ENCODE measurements at regions of chr4 and their contacts with region 1.

Region 1: GRCh38 chr4:176340871-176341685 is 21.3 kb downstream of the SPCS3 start:
- DNase-seq: no peak
- ATAC-seq: peak; percentile 76
- H3K4me3 ChIP-seq: no peak overlapping the region
- H3K27ac ChIP-seq: no peak overlapping the region
- H3K4me1 ChIP-seq: no peaks in the 10 kb centered on the region
- H3K27me3 ChIP-seq: no peaks in the 10 kb centered on the region
- CTCF ChIP-seq: peak; percentile 50 to 74 (median 55); a peak in 5 of 6 replicates
- EP300 ChIP-seq: no peak
- POLR2A ChIP-seq: no peak
- RAD21 ChIP-seq: peak; percentile 86

Region 2: DNA sequence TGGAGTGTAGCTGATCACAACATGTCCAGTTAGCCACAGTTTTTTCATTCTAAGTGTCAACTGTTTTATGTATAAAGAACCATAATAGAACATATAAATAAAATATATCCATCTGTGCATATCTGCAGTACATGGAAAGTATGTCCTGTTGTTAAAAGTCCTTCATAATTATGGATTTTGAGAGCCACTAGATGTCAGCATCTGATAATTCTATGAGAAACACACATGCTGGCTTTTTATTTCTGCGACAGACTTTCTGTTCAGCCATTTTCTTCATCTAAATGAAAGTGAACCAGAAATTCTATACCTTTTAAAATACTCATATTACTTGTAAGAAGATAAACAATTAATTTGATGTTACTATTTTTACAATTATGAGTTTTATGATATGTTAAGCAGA is 780.5 kb before region 1 on chr4:
- CTCF ChIA-PET with region 1: interaction called, 7 read pairs
- POLR2A ChIA-PET with region 1: no interaction called
- RAD21 ChIA-PET with region 1: no interaction called
- SMC1A ChIA-PET with region 1: no interaction called
- in situ Hi-C with region 1: loop called (anchors 25 kb)
- intact Hi-C with region 1: loop called (anchors 5 kb)
- DNase-seq: no peak
- ATAC-seq: peak; percentile 46; the same call in 2 of the 3 replicates
- H3K4me3 ChIP-seq: no peak overlapping the region
- H3K27ac ChIP-seq: no peak overlapping the region
- H3K4me1 ChIP-seq: no peaks in the 10 kb centered on the region
- H3K27me3 ChIP-seq: no peaks in the 10 kb centered on the region
- CTCF ChIP-seq: peak in 2 of 3 experiments; percentile 13 to 50; a peak in 2 of 6 replicates
- EP300 ChIP-seq: no peak
- POLR2A ChIP-seq: no peak
- RAD21 ChIP-seq: peak; percentile 66

Region 3: DNA sequence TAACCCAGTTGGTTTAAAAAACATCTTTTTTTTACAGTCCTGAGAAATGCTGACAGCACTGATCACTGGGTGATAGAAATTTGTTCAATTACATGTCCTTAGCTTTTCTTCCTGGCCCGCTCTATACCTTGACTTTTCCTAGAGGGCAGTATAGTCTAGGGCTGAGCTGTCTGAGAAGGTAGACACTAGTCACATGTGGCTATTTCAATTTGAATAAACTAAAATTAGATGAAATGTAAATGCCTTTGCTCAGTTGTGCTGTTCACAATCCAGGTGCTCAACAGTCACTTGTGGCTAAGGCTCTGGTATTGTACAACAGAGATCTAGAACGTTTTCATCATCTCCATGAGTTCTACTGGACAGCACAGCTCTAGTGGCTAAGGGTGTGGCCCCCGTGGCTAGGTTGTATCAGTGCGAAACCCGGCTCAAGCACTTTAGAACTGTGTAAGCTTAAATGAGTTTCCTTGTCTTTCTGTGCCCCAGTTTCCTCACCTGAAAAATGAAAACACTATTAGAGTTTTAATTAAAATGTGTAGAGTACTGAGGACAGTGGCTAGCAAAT is 387.0 kb before region 1 on chr4:
- CTCF ChIA-PET with region 1: interaction called, 12 read pairs
- POLR2A ChIA-PET with region 1: no interaction called
- RAD21 ChIA-PET with region 1: interaction called, 16 read pairs
- SMC1A ChIA-PET with region 1: interaction called, 17 read pairs
- in situ Hi-C with region 1: loop called (anchors 10 kb)
- intact Hi-C with region 1: loop called (anchors 2 kb)
- DNase-seq: no peak
- ATAC-seq: peak; percentile 95
- H3K4me3 ChIP-seq: no peak overlapping the region
- H3K27ac ChIP-seq: no peak overlapping the region
- H3K4me1 ChIP-seq: no peaks in the 10 kb centered on the region
- H3K27me3 ChIP-seq: peaks cover 0 to 3% of the 10 kb centered on the region in 2 experiments; a peak in 1 of 4 replicates
- CTCF ChIP-seq: peak; percentile 40 to 46 (median 44); a peak in 5 of 6 replicates
- EP300 ChIP-seq: no peak
- POLR2A ChIP-seq: no peak
- RAD21 ChIP-seq: peak; percentile 67

Region 4: GRCh38 chr4:176123710-176124407 is 217.2 kb before region 1 on chr4:
- CTCF ChIA-PET with region 1: interaction called, 10 read pairs
- POLR2A ChIA-PET with region 1: no interaction called
- RAD21 ChIA-PET with region 1: no interaction called
- SMC1A ChIA-PET with region 1: no interaction called
- in situ Hi-C with region 1: no loop called
- intact Hi-C with region 1: no loop called
- DNase-seq: peak; percentile 51
- ATAC-seq: peak; percentile 99
- H3K4me3 ChIP-seq: 0 out of 2 replicates have a peak overlapping the region, but pooled peaks have one; percentile 1
- H3K27ac ChIP-seq: no peak overlapping the region
- H3K4me1 ChIP-seq: peaks cover 7% of the 10 kb centered on the region
- H3K27me3 ChIP-seq: no peaks in the 10 kb centered on the region
- CTCF ChIP-seq: peak; percentile 47 to 80 (median 67)
- EP300 ChIP-seq: peak; percentile 71 to 78; a peak in 3 of 4 replicates
- POLR2A ChIP-seq: no peak
- RAD21 ChIP-seq: peak; percentile 33

Region 5: GRCh38 chr4:176207839-176208238 is 133.2 kb before region 1 on chr4:
- CTCF ChIA-PET with region 1: no interaction called
- POLR2A ChIA-PET with region 1: no interaction called
- RAD21 ChIA-PET with region 1: no interaction called
- SMC1A ChIA-PET with region 1: no interaction called
- in situ Hi-C with region 1: no loop called
- intact Hi-C with region 1: no loop called
- DNase-seq: no peak
- ATAC-seq: no peak
- H3K4me3 ChIP-seq: no peak overlapping the region
- H3K27ac ChIP-seq: no peak overlapping the region
- H3K4me1 ChIP-seq: no peaks in the 10 kb centered on the region
- H3K27me3 ChIP-seq: peaks cover 0 to 2% of the 10 kb centered on the region in 2 experiments; a peak in 2 of 4 replicates
- CTCF ChIP-seq: no peak
- EP300 ChIP-seq: no peak
- POLR2A ChIP-seq: no peak
- RAD21 ChIP-seq: no peak

Region 6: GRCh38 chr4:176319704-176320339 is 21.3 kb before region 1 on chr4 and contains the start of gene SPCS3:
- CTCF ChIA-PET with region 1: interaction called, 27 read pairs
- POLR2A ChIA-PET with region 1: no interaction called
- RAD21 ChIA-PET with region 1: no interaction called
- SMC1A ChIA-PET with region 1: interaction called, 36 read pairs
- in situ Hi-C with region 1: no loop called
- intact Hi-C with region 1: no loop called
- DNase-seq: peak; percentile 67
- ATAC-seq: peak; percentile 94
- H3K4me3 ChIP-seq: peak within 1 kb of the TSS; percentile 81
- H3K27ac ChIP-seq: peak within 1 kb of the TSS; percentile 83
- H3K4me1 ChIP-seq: peaks cover 9% of the 10 kb centered on the region; the same call in 1 of the 2 replicates
- H3K27me3 ChIP-seq: no peaks in the 10 kb centered on the region
- CTCF ChIP-seq: no peak
- EP300 ChIP-seq: no peak
- POLR2A ChIP-seq: peak; percentile 94
- RAD21 ChIP-seq: no peak
- polyA plus RNA-seq, gene SPCS3: 50.6 to 53.4 TPM

Region 7: DNA sequence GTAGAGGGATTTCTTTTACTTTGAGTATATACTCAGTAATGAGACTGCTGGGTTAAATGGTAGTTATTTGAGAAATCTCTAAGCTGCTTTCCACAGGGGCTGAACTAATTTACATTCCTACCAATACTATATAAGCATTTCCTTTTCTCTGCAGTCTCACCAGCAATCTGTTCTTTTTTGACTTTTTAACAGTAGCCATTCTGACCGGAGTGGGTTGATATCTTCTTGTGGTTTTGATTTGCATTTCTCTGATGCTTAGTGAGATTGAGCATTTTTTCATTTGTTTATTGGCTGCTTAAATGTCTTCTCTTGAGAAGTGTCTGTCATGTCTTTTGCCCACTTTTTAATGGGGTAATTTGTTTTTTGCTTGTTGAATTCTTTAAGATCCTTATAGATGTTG is 22.0 kb after region 1 on chr4:
- CTCF ChIA-PET with region 1: no interaction called
- POLR2A ChIA-PET with region 1: no interaction called
- RAD21 ChIA-PET with region 1: no interaction called
- SMC1A ChIA-PET with region 1: no interaction called
- in situ Hi-C with region 1: no loop called
- intact Hi-C with region 1: no loop called
- DNase-seq: no peak
- ATAC-seq: peak; percentile 40
- H3K4me3 ChIP-seq: no peak overlapping the region
- H3K27ac ChIP-seq: no peak overlapping the region
- H3K4me1 ChIP-seq: peaks cover 8% of the 10 kb centered on the region; the same call in 1 of the 2 replicates
- H3K27me3 ChIP-seq: no peaks in the 10 kb centered on the region
- CTCF ChIP-seq: no peak
- EP300 ChIP-seq: no peak
- POLR2A ChIP-seq: no peak
- RAD21 ChIP-seq: no peak

Region 8: GRCh38 chr4:177016541-177017141 is 675.6 kb after region 1 on chr4:
- CTCF ChIA-PET with region 1: no interaction called
- POLR2A ChIA-PET with region 1: no interaction called
- RAD21 ChIA-PET with region 1: no interaction called
- SMC1A ChIA-PET with region 1: no interaction called
- in situ Hi-C with region 1: no loop called
- intact Hi-C with region 1: no loop called
- DNase-seq: no peak
- ATAC-seq: no peak
- H3K4me3 ChIP-seq: no peak overlapping the region
- H3K27ac ChIP-seq: no peak overlapping the region
- H3K4me1 ChIP-seq: no peaks in the 10 kb centered on the region
- H3K27me3 ChIP-seq: no peaks in the 10 kb centered on the region
- CTCF ChIP-seq: no peak
- EP300 ChIP-seq: no peak
- POLR2A ChIP-seq: no peak
- RAD21 ChIP-seq: no peak